ENCODE measurements at regions of chr1 and their contacts with region 1.

Region 1: GRCh38 chr1:240234485-240235210 is 143.0 kb downstream of the FMN2 start:
- DNase-seq: no peak
- ATAC-seq: no peak
- H3K4me3 ChIP-seq: no peak overlapping the region
- H3K27ac ChIP-seq: no peak overlapping the region
- H3K4me1 ChIP-seq: no peaks in the 10 kb centered on the region
- H3K27me3 ChIP-seq: no peaks in the 10 kb centered on the region
- CTCF ChIP-seq: no peak
- POLR2A ChIP-seq: no peak

Region 2: GRCh38 chr1:240092301-240093119 is 142.1 kb before region 1 on chr1:
- in situ Hi-C with region 1: no loop called
- intact Hi-C with region 1: no loop called
- DNase-seq: no peak
- ATAC-seq: no peak
- H3K4me3 ChIP-seq: peak overlapping the region in 3 of 4 donors; percentile 9 to 34 (median 22)
- H3K27ac ChIP-seq: no peak overlapping the region
- H3K4me1 ChIP-seq: peaks cover 0 to 4% of the 10 kb centered on the region in 2 donors
- H3K27me3 ChIP-seq: peaks cover 37 to 61% (median 44%) of the 10 kb centered on the region in 3 donors
- CTCF ChIP-seq: no peak
- POLR2A ChIP-seq: no peak

Region 3: DNA sequence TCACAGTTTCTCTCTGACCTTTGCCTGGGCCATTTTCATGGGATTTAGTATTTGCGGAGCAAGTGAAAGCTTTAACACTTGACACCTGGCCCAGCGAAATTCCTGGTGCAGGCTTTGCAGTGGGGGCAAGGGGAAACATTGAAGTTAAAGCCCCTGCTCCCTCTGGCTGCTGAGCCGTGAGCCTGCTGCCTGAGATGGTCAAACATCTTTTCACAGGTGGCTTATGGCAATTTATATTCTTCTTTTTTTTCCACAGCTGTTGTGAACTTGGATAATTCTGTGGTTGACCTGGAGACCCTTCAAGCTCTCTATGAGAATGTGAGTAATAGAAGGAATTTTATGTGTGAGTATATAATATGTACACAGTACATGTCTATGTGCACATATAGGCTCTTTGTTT is 59.9 kb after region 1 on chr1:
- in situ Hi-C with region 1: no loop called
- intact Hi-C with region 1: loop called (anchors 10 kb)
- DNase-seq: no peak
- ATAC-seq: no peak
- H3K4me3 ChIP-seq: no peak overlapping the region
- H3K27ac ChIP-seq: no peak overlapping the region
- H3K4me1 ChIP-seq: no peaks in the 10 kb centered on the region
- H3K27me3 ChIP-seq: no peaks in the 10 kb centered on the region
- CTCF ChIP-seq: no peak
- POLR2A ChIP-seq: no peak

Region 4: GRCh38 chr1:240528591-240528990 is 293.9 kb after region 1 on chr1:
- in situ Hi-C with region 1: no loop called
- intact Hi-C with region 1: no loop called
- DNase-seq: peak in 1 of 2 donors; percentile 16
- ATAC-seq: peak in 1 of 2 donors; percentile 50
- H3K4me3 ChIP-seq: no peak overlapping the region
- H3K27ac ChIP-seq: peak overlapping the region in 1 of 4 donors; percentile 52
- H3K4me1 ChIP-seq: no peaks in the 10 kb centered on the region
- H3K27me3 ChIP-seq: no peaks in the 10 kb centered on the region
- CTCF ChIP-seq: no peak
- POLR2A ChIP-seq: no peak